Left cardiac atrium (tissue), 4 donors: ENCODE measurements at regions of chr12 and their contacts with region 1.

Region 1: DNA sequence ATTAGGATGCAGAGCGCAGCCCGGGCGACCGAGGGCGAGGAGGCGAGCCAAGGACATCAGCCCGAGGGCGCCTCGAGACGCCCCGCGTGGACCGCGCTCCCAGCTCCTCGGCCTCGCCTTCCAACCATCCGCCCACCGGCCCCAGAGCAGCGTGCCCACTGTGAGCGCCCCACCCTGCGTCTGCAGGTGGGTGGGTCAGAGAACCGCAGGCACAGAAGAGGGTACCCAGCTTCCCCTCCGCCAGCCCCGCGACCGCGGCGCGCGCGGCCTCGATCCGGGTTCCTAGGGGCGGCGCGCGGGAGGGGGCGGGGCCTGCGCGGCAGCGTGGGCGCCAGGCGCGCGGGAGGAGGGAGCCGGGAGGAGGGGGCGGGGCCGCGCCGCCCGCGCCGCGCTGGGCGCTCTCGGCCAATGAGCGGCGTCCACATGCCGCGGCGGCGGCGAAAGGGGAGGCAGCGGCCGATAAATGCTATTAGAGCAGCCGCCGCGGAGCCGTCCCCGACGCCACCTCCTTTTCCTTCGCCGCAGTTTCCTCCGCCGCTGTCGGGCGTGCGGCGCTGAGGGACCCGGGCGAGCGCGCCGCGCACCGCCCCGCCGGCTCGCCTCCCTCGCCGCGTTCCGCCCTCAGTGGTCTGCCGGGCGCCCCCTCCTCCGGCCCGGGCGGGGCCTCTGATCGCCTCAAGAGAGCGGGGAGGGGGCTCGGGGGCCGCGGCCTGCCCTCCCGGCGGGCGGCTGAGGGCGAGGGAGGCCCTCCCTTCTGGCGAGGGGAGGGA is at the start of gene ATP2A2:
- DNase-seq: peak; percentile 93
- ATAC-seq: peak; percentile 94
- total RNA-seq, gene ATP2A2: 2,696 to 3,455 TPM

Region 2: GRCh38 chr12:110245369-110245772 is 35.6 kb before region 1 on chr12:
- intact Hi-C with region 1: loop called in 1 of 2 experiments (anchors 5 kb)
- DNase-seq: peak; percentile 31
- ATAC-seq: peak in 1 of 2 donors; percentile 3